ENCODE measurements at regions of chr3 and their contacts with region 1.

Region 1: DNA sequence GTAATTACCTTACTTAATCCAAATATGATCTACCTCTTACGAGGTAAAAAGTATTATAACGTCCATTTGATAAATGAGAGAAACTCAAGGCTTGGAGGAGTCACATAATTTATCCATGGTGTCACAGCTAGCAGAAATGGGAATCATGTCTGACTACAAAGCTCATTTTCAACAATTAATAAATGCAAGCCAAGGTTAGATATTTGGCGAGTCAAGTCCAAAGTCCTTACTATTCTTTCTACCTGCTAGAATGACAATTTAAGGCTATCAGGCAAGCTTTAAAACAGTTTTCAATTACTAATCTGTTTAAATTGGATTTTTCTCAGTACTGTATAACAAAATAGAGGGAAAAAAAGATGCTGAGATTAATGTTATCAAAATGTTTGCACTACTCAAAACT is 68.6 kb downstream of the DLG1 start:
- DNase-seq: no peak
- H3K4me3 ChIP-seq: no peak overlapping the region
- H3K27ac ChIP-seq: no peak overlapping the region
- H3K4me1 ChIP-seq: no peaks in the 10 kb centered on the region
- H3K27me3 ChIP-seq: no peaks in the 10 kb centered on the region
- CTCF ChIP-seq: no peak

Region 2: DNA sequence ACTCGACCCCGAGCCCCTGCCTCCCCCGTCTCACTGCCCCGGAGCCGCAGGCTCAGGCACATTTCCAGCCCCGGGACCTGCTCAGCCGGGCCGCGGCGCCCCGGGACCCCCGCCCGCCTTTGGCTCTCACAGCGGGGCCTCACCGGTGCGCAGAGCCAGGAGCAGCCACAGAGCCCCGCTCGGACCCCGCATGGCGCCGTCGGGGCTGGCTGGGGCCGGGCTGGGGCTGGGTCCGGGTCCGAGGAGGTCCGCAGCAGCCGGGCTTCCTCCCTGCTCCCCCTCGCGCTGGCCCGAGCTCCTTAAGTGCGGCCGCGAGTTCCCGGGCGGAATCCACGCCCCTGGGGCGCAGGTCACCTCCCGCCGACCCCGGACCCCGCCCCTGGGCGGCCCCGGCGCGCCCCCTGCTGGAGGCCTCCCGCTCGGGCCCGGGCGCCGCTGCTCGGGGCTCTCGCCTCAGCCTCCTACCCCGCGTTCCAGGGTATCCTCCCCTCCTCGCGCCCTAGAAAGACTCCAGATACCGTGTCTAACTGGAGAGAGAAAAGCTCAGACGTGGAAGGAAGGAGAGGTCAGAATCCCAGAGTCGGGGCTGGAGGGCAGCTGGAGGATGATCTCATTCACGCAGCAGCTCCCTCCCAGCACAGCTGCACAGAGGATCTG is 200.2 kb before region 1 on chr3 and contains the start of gene MELTF:
- CTCF ChIA-PET with region 1: no interaction called
- POLR2A ChIA-PET with region 1: no interaction called
- intact Hi-C with region 1: no loop called
- DNase-seq: peak; percentile 46 to 90
- H3K4me3 ChIP-seq: peak within 1 kb of the TSS; percentile 82
- H3K27ac ChIP-seq: peak within 1 kb of the TSS; percentile 90
- H3K4me1 ChIP-seq: peaks cover 19% of the 10 kb centered on the region
- H3K27me3 ChIP-seq: no peaks in the 10 kb centered on the region
- CTCF ChIP-seq: peak; percentile 88
- total RNA-seq, gene MELTF: 154 and 202 TPM in 2 replicates

Region 3: DNA sequence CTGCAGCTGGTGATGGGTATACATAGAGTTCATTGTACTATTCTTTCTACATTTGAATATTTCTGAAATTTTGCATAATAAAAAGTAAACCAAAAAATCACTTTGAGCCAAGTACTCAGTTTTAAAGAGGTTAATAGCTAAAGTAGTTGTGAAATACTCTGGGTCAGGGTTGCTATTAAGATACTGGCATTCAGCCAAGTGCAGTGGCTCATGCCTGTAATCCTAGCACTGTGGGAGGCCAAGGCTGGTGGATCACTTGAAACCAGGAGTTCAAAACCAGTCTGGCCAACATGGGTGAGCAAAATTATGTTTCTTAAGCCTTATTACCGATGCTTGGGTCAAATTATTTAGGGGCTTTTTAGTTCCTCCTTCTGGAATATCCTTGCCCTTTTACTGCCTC is 78.3 kb before region 1 on chr3:
- CTCF ChIA-PET with region 1: no interaction called
- POLR2A ChIA-PET with region 1: interaction called, 12 read pairs
- intact Hi-C with region 1: no loop called
- DNase-seq: peak; percentile 51 to 76
- H3K4me3 ChIP-seq: no peak overlapping the region
- H3K27ac ChIP-seq: peak overlapping the region; percentile 57
- H3K4me1 ChIP-seq: peaks cover 15% of the 10 kb centered on the region
- H3K27me3 ChIP-seq: no peaks in the 10 kb centered on the region
- CTCF ChIP-seq: no peak

Region 4: DNA sequence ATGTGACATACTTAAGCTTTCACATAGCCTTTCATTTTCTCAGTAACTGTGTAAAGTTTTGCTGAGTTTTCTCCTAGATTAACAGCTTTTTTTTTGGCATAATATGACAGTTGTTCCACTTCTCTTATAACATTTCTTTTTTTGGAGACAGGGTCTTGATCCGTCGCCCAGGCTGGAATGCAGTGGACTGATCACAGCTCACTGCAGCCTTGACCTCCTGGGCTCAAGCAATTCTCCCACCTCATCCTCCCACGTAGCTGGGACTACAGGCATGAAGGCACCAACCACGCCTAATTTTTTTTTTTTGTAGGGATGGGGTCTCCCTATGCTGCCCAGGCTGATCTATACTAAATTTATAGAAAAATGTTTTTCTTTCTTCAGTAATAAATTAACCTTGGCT is 38.5 kb after region 1 on chr3:
- CTCF ChIA-PET with region 1: no interaction called
- POLR2A ChIA-PET with region 1: no interaction called
- intact Hi-C with region 1: no loop called
- DNase-seq: no peak
- H3K4me3 ChIP-seq: no peak overlapping the region
- H3K27ac ChIP-seq: no peak overlapping the region
- H3K4me1 ChIP-seq: peaks cover 26% of the 10 kb centered on the region
- H3K27me3 ChIP-seq: no peaks in the 10 kb centered on the region
- CTCF ChIP-seq: no peak

Region 5: GRCh38 chr3:197320582-197320981 is 90.7 kb after region 1 on chr3:
- CTCF ChIA-PET with region 1: no interaction called
- POLR2A ChIA-PET with region 1: no interaction called
- intact Hi-C with region 1: no loop called
- DNase-seq: no peak
- H3K4me3 ChIP-seq: no peak overlapping the region
- H3K27ac ChIP-seq: no peak overlapping the region
- H3K4me1 ChIP-seq: peaks cover 21% of the 10 kb centered on the region
- H3K27me3 ChIP-seq: no peaks in the 10 kb centered on the region
- CTCF ChIP-seq: no peak

Region 6: DNA sequence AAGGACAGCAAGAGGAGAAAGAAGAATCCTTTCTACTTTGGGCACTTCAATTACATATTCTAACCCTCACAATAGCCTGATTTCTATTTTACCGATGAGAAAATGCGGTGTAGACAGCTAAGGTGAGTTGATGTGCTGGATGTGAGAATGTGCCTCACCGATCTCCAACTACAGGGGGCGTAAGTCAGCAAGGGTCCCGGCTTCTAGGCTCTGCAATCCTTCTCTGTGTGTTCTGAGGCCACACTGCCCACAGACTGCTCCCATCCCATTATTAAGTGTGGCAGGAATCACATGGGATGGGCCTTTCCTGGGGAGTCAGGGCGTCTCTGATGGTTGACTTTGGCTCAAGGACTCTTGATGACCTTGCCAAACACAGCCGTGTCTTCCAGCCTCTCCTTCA is 696.6 kb after region 1 on chr3:
- CTCF ChIA-PET with region 1: interaction called, 12 read pairs
- POLR2A ChIA-PET with region 1: no interaction called
- intact Hi-C with region 1: no loop called
- DNase-seq: no peak
- H3K4me3 ChIP-seq: no peak overlapping the region
- H3K27ac ChIP-seq: no peak overlapping the region
- H3K4me1 ChIP-seq: no peaks in the 10 kb centered on the region
- H3K27me3 ChIP-seq: no peaks in the 10 kb centered on the region
- CTCF ChIP-seq: peak; percentile 52

Measured in PC-9 (cell line).